ENCODE measurements at regions of chr22 and their contacts with region 1.

Region 1: DNA sequence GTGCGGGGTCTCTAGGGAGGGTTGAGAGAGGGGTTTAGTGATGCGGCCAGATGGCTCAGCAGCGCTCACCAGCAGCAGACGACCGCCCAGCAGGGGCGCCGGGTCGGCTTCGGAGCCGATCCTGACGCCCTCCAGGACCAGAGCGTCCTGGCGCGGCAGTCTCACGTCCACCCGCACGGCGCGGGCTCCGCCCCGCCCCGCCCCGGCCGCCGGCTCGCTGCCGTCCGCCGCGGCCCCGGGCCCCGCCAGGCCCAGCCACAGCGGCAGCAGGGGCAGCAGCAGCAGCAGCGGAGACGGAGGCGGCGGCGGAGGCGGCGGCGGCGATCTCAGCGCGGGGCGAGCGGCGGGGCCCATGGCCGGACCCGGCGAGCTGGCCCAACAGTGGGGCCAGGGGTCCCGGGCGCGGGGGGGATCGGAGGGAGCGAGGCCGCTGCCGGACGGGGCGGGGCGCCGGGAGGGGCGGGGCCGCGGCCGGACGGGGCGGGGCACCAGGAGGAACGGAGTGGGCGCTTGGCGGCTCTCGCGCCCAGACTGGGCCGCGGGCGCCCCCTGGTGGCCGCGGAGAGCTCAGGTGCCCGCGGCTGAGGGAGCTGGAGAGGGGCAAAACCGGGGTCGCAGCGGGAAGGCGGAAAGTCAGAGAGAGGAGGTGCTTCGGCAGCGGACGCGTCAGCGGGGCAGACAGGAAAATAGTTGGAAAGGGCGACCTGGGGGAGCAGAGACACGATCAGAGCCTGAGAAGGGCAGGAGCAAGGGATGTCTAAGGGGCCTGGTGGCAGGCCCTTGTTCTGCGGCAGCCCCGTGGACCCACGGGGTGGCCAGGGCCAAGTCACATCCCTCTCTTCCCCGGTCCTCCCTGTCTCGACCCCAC is at the start of gene RNF215:
- DNase-seq: peak; percentile 88
- H3K4me3 ChIP-seq: peak within 1 kb of the TSS; percentile 46 to 67 (median 62)
- H3K27ac ChIP-seq: peak within 1 kb of the TSS; percentile 76 to 86 (median 81)
- H3K4me1 ChIP-seq: peaks cover 3 to 16% (median 14%) of the 10 kb centered on the region in 4 donors
- H3K27me3 ChIP-seq: no peaks in the 10 kb centered on the region
- CTCF ChIP-seq: peak; percentile 92 to 94 (median 94)
- EP300 ChIP-seq: no peak
- POLR2A ChIP-seq: no peak
- total RNA-seq, gene RNF215: 12.2 to 21.6 (median 13.0) TPM

Region 2: GRCh38 chr22:30262917-30263741 is 124.1 kb before region 1 on chr22:
- intact Hi-C with region 1: loop called (anchors 1 kb)
- DNase-seq: peak; percentile 87
- H3K4me3 ChIP-seq: peak overlapping the region in 2 of 4 donors; percentile 19 to 32
- H3K27ac ChIP-seq: no peak overlapping the region
- H3K4me1 ChIP-seq: peaks cover 0 to 7% (median 2%) of the 10 kb centered on the region in 4 donors
- H3K27me3 ChIP-seq: no peaks in the 10 kb centered on the region
- CTCF ChIP-seq: peak; percentile 89 to 99 (median 98)
- EP300 ChIP-seq: no peak
- POLR2A ChIP-seq: no peak

Region 3: GRCh38 chr22:30326706-30327362 is 60.4 kb before region 1 on chr22 and contains the start of gene TBC1D10A:
- intact Hi-C with region 1: loop called (anchors 2 kb)
- DNase-seq: peak; percentile 94
- H3K4me3 ChIP-seq: peak within 1 kb of the TSS; percentile 83 to 100 (median 96)
- H3K27ac ChIP-seq: peak within 1 kb of the TSS; percentile 91 to 98 (median 92)
- H3K4me1 ChIP-seq: peaks cover 0 to 48% (median 44%) of the 10 kb centered on the region in 4 donors
- H3K27me3 ChIP-seq: no peaks in the 10 kb centered on the region
- CTCF ChIP-seq: no peak
- EP300 ChIP-seq: no peak
- POLR2A ChIP-seq: peak; percentile 68 to 75
- total RNA-seq, gene TBC1D10A: 12.5 to 31.0 (median 26.8) TPM

Region 4: GRCh38 chr22:30423982-30424963 is 37.1 kb after region 1 on chr22:
- intact Hi-C with region 1: loop called (anchors 5 kb)
- DNase-seq: peak; percentile 100
- H3K4me3 ChIP-seq: peak overlapping the region; percentile 55 to 72 (median 63)
- H3K27ac ChIP-seq: peak overlapping the region; percentile 91 to 97 (median 94)
- H3K4me1 ChIP-seq: peaks cover 0 to 58% (median 49%) of the 10 kb centered on the region in 4 donors
- H3K27me3 ChIP-seq: no peaks in the 10 kb centered on the region
- CTCF ChIP-seq: no peak
- EP300 ChIP-seq: no peak
- POLR2A ChIP-seq: no peak

Measured in sigmoid colon (tissue), 7 donors.